Natural killer cell (primary cell): ENCODE measurements at regions of chr7 and their contacts with region 1.

Region 1: GRCh38 chr7:32891800-32892520 is 400 bp upstream of the KBTBD2 start:
- DNase-seq: peak; percentile 96 to 99
- ATAC-seq: peak; percentile 65 to 81 (median 66)
- H3K4me3 ChIP-seq: peak overlapping the region; percentile 80
- H3K4me3 Mint-ChIP-seq: peak overlapping the region; percentile 95
- H3K27ac ChIP-seq: peak overlapping the region; percentile 99
- H3K27ac Mint-ChIP-seq: peak overlapping the region; percentile 96 to 99
- H3K4me1 ChIP-seq: peaks cover 21% of the 10 kb centered on the region
- H3K4me1 Mint-ChIP-seq: peaks cover 51 to 54% of the 10 kb centered on the region in 2 donors
- H3K27me3 ChIP-seq: no peaks in the 10 kb centered on the region
- H3K27me3 Mint-ChIP-seq: peaks cover 0 to 3% of the 10 kb centered on the region in 2 donors
- CTCF ChIP-seq: no peak

Region 2: GRCh38 chr7:32495298-32496176 is 396.4 kb before region 1 on chr7 and contains the start of gene AVL9:
- intact Hi-C with region 1: loop called (anchors 5 kb)
- DNase-seq: peak; percentile 98
- ATAC-seq: peak; percentile 91 to 99 (median 92)
- H3K4me3 ChIP-seq: peak within 1 kb of the TSS; percentile 90
- H3K4me3 Mint-ChIP-seq: peak within 1 kb of the TSS; percentile 99
- H3K27ac ChIP-seq: peak within 1 kb of the TSS; percentile 97
- H3K27ac Mint-ChIP-seq: peak within 1 kb of the TSS; percentile 86 to 95
- H3K4me1 ChIP-seq: peaks cover 13% of the 10 kb centered on the region
- H3K4me1 Mint-ChIP-seq: peaks cover 35 to 37% of the 10 kb centered on the region in 2 donors
- H3K27me3 ChIP-seq: no peaks in the 10 kb centered on the region
- H3K27me3 Mint-ChIP-seq: no peaks in the 10 kb centered on the region
- CTCF ChIP-seq: no peak
- total RNA-seq, gene AVL9: 36.0 to 50.0 (median 43.8) TPM

Region 3: DNA sequence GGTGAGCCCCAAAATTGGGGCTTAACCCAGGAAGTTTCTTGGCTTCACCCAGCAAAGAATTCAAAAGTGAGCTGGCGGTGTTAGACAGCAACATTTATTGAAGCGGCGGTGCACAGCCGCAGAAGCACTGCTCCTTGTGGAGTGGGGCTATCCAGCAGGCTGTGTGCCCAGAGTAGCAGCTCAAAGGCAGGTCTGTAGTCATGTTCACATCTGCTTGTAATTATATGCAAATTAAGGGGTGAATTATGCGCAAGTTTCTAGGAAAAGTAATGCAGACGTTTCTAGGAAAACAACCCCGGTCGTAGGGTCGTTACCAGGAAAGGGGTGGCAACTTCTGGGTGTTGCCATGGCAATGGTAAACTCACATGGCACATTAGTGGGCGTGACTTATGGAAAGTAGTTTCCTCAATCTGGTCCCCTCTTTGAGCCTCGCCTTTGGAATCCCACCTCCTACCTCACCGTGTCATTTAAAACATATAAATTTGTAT is 13.3 kb after region 1 on chr7:
- intact Hi-C with region 1: loop called (anchors 1 kb)
- DNase-seq: peak; percentile 23 to 89
- ATAC-seq: peak; percentile 81 to 85 (median 83)
- H3K4me3 ChIP-seq: peak overlapping the region; percentile 11
- H3K4me3 Mint-ChIP-seq: peak overlapping the region; percentile 86
- H3K27ac ChIP-seq: peak overlapping the region; percentile 67
- H3K27ac Mint-ChIP-seq: peak overlapping the region; percentile 82 to 88
- H3K4me1 ChIP-seq: peaks cover 14% of the 10 kb centered on the region
- H3K4me1 Mint-ChIP-seq: peaks cover 6 to 7% of the 10 kb centered on the region in 2 donors
- H3K27me3 ChIP-seq: no peaks in the 10 kb centered on the region
- H3K27me3 Mint-ChIP-seq: peaks cover 0 to 2% of the 10 kb centered on the region in 2 donors
- CTCF ChIP-seq: no peak

Region 4: DNA sequence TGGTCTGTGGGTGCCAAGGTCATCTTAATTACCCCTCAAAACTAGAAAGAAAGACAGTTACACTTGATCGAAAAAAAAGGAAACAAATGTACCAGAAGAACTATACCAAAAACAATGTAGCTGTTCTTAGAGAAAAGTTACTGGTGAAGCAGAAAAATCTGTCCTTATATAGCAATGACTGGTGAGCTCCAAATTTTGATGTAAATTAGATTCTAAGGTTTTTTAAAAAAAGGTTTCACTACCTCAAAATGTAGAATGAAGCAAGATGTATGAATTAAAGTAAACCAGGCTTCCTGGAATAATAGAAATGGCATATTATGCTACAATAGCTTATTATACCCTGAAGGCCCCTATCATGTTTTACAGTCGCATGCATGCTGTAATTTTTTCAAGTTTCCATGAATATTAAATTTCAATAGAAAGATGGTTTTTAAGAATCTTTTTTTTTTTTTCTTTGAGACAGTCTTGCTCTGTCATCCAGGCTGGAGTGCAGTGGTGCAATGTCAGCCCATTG is 36.9 kb after region 1 on chr7:
- intact Hi-C with region 1: no loop called
- DNase-seq: no peak
- ATAC-seq: no peak
- H3K4me3 ChIP-seq: no peak overlapping the region
- H3K4me3 Mint-ChIP-seq: no peak overlapping the region
- H3K27ac ChIP-seq: no peak overlapping the region
- H3K27ac Mint-ChIP-seq: no peak overlapping the region
- H3K4me1 ChIP-seq: no peaks in the 10 kb centered on the region
- H3K4me1 Mint-ChIP-seq: no peaks in the 10 kb centered on the region
- H3K27me3 ChIP-seq: no peaks in the 10 kb centered on the region
- H3K27me3 Mint-ChIP-seq: no peaks in the 10 kb centered on the region
- CTCF ChIP-seq: no peak

Region 5: DNA sequence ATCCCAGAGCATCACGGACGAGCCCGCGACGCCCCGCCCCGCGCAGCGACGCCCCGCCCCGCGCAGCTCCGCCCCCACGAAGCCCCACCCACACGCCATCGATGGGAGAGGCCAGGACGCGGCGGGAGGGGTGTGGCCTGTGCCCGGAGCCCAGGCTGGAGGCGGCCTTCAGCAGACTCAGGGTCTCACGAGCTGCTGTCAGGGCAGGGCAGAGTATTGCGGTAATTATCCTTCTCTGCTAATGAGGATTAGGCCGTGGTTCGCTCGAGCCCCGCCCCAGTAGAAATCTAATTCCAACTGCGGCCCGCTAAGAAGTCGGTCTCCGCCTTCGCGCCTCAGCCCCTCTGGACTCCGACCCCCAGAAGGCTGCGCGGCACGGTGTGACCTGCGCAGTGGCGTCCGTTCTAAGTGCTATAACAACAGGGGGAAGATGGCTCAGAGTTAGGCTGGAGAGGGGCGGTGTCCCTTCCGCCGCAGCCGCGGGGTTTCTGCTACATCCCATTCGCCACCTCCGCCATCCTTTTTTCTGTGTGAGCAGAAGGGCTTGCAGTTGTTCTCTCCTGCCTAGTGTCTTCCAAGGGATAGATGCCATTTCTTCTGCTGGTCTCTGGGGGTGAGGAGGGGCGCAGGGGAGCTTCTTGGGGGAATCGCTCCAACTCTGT is 171.0 kb after region 1 on chr7:
- intact Hi-C with region 1: loop called (anchors 2 kb)
- DNase-seq: peak; percentile 89 to 96
- ATAC-seq: peak; percentile 92 to 99 (median 93)
- H3K4me3 ChIP-seq: peak overlapping the region; percentile 78
- H3K4me3 Mint-ChIP-seq: peak overlapping the region; percentile 93
- H3K27ac ChIP-seq: peak overlapping the region; percentile 85
- H3K27ac Mint-ChIP-seq: peak overlapping the region; percentile 87 to 95
- H3K4me1 ChIP-seq: peaks cover 10% of the 10 kb centered on the region
- H3K4me1 Mint-ChIP-seq: peaks cover 24 to 38% of the 10 kb centered on the region in 2 donors
- H3K27me3 ChIP-seq: no peaks in the 10 kb centered on the region
- H3K27me3 Mint-ChIP-seq: peaks cover 8 to 9% of the 10 kb centered on the region in 2 donors
- CTCF ChIP-seq: no peak

Region 6: DNA sequence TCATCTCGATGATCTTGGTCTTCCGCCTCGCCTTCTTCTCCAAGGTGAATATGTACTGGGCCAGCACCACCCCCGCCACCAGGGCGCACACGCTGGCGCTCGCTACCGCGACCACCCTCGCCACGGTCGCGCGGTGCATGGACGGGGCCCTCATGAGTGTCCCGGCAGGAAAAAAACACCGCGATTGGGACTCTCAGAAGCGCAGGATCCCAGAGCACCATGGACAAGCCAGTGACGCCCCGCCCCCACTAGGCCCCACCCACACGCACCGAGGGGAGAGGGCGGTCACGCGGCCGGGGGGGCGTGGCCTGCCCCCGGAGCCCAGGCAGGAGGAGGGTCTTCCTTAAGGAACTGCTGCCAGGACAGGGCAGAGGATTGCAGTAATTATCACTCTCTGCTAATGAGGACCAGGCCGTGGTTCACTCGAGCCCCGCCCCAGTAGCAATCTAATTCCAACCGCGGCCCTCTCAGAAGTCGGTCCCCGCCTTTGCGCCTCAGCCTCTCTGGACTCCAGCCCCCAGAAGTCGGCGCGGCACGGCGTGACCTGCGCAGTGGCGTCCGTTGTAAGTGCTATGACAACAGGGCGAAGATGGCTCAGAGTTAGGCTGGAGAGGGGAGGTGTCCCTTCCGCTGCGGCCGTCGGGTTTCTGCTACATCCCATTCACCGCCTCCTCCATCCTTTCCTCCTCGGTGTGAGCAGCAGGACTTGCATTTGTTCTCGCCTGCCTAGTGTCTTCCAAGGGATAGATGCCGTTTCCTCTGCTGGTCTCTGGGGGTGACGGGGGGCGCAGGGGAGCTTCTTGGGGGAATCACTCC is 237.2 kb after region 1 on chr7 and contains the start of gene BBS9:
- intact Hi-C with region 1: loop called (anchors 1 kb)
- DNase-seq: peak; percentile 88 to 94
- ATAC-seq: peak; percentile 95 to 98 (median 97)
- H3K4me3 ChIP-seq: peak within 1 kb of the TSS; percentile 62
- H3K4me3 Mint-ChIP-seq: peak within 1 kb of the TSS; percentile 97
- H3K27ac ChIP-seq: peak within 1 kb of the TSS; percentile 42
- H3K27ac Mint-ChIP-seq: peak within 1 kb of the TSS; percentile 88 to 89
- H3K4me1 ChIP-seq: peaks cover 8% of the 10 kb centered on the region
- H3K4me1 Mint-ChIP-seq: peaks cover 11 to 20% of the 10 kb centered on the region in 2 donors
- H3K27me3 ChIP-seq: no peaks in the 10 kb centered on the region
- H3K27me3 Mint-ChIP-seq: no peaks in the 10 kb centered on the region
- CTCF ChIP-seq: no peak
- total RNA-seq, gene BBS9: 25.1 to 34.6 (median 34.4) TPM